ENCODE measurements at regions of chr1 and their contacts with region 1.

Region 1: DNA sequence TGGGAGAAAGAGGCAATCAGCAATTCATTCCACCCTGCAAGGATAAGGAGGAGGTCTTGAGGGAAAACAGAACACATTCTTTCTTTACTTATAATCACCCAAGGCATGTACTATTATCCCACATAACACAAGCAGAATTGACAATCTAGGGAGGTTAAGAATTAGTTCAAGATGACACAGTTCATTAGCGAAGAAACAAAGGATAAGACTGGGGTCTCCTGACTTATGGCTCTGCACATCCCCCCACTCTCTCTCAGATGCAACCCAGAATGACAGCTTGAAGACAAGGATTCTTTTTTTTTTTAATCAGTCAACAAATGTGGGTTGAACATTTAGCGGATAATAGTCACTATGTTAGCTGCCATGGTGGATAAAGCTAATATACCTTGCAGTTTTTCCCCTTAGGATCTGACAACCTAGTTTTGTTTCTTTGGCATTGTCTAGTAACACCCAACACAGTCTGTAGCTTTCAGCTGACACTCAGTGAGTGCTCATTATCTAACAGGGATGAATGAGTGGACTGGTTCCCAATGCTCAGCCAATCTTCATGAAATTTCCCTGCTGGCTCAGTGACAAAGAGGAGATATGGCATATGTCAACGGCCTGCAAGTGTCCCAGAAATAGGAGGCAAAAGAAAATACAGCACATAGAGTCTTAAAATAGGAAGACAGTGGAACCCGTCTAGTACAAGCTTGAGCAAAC is 35.1 kb downstream of the RXRG start:
- DNase-seq: no peak

Region 2: DNA sequence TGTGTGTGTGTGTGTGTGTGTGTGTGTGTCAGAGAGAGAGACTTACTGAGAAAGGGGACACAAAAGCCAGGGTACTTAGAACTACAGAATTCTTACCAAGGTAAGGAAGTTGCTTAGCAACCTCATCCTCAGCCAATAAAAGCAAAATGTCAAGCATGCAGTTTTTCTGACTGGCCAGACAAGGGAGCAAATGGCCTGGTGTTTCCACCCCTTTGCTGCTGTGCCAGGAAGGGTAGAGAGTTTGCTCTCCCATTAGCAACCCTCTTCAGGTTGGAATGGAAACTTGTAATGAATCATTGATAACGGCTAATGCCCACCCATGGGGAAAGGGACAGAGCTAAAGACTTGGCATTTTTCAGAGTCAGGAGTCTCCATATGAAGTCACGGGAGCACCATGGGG is 24.5 kb after region 1 on chr1:
- intact Hi-C with region 1: no loop called
- DNase-seq: no peak

Region 3: DNA sequence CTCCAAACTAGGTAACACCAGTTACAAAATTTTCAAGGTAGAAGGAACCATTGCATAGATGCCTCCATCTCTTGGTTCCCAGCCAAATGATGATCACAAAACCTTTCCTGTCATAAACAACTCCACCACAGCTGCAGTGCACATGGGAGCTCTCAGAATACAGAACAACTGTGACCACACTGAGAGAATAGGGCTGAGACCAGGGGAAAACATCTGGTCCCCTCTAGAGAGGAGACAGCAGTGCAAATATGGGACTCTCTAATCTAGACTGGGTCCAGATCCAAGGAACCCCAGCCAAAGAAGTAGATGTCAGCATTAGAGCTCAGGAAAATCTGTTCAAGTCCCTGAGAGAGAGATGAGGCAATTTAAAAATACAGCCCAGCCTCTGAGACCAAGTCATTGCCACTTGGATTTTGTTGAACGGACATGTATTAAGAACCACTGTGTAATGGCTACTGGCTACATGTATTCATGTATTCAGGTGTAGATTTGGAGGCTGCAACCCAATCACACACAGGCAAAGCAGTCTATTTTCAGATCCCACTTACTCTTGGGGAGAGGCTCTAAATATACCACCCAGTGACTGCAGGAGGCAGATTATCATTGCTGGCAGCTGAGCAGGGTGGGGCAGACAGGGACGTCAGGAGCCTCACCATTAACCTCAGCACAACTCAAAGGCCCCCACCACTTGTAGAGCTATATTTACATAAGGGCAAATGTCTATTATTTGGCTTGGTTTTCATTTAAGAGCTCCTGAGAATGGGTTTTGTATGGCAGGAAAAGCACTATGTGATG is 42.7 kb after region 1 on chr1:
- intact Hi-C with region 1: loop called (anchors 2 kb)
- DNase-seq: no peak

Measured in cardiac septum (tissue), 1 donor.